ENCODE measurements at regions of chr7 and their contacts with region 1.

Region 1: GRCh38 chr7:25565949-25566348 is 337.7 kb upstream of the NPVF start:
- DNase-seq: peak in 1 of 2 donors; percentile 73
- ATAC-seq: no peak

Region 2: DNA sequence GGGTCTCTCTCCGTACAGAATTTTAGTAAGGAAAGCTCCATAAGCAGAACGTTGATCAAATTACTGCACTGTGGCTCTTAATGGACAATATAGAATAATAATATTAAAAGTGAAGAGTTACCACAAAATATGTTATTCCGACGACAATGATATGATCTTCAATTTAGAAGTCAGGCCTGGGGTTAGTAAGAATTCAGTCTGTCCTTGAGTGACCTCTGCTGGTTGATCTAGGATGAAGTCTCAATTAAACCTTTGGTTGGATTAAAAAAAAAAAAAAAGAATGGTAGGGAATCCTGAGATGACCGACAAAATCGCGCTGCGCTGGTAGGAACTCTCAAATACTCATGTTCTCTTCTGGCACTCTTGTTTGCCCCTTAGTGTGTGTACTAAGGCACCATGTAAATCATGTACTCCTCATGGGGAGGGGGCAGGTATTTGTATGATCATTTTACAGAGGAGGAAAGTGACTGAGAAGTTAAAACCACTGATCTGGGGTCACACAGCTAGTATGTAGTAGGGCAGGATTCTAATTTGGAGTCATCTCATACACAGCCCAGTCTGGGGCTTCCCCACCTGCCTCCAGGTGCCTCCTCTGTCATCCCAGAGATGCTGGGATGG is 176.4 kb before region 1 on chr7:
- intact Hi-C with region 1: loop called (anchors 2 to 10 kb)
- DNase-seq: peak in 1 of 2 donors; percentile 23
- ATAC-seq: peak; percentile 73